ENCODE measurements at regions of chr5 and their contacts with region 1.

Region 1: GRCh38 chr5:64229163-64229774 is 63.6 kb downstream of the RNF180 start:
- DNase-seq: peak; percentile 66
- CTCF ChIP-seq: peak; percentile 36

Region 2: GRCh38 chr5:62960781-62961180 is 1268.5 kb before region 1 on chr5:
- in situ Hi-C with region 1: no loop called
- DNase-seq: no peak
- CTCF ChIP-seq: no peak

Region 3: GRCh38 chr5:64612344-64612961 is 383.2 kb after region 1 on chr5:
- in situ Hi-C with region 1: loop called (anchors 10 kb)
- DNase-seq: peak; percentile 11
- CTCF ChIP-seq: peak; percentile 54

Region 4: GRCh38 chr5:64784451-64785025 is 555.3 kb after region 1 on chr5:
- in situ Hi-C with region 1: loop called (anchors 25 kb)
- DNase-seq: no peak
- CTCF ChIP-seq: peak; percentile 75

Measured in GM13976 (cell line).